ENCODE measurements at regions of chr12 and their contacts with region 1.

Region 1: GRCh38 chr12:101670007-101670687 is 27.3 kb upstream of the CHPT1 start:
- DNase-seq: peak; percentile 39 to 72 (median 50)
- ATAC-seq: peak; percentile 81
- H3K4me3 ChIP-seq: no peak overlapping the region
- H3K27ac ChIP-seq: no peak overlapping the region
- H3K4me1 ChIP-seq: no peaks in the 10 kb centered on the region; a peak in 3 of 5 replicates
- H3K27me3 ChIP-seq: peaks cover 2 to 7% of the 10 kb centered on the region in 2 experiments; a peak in 2 of 5 replicates
- CTCF ChIP-seq: peak; percentile 70 to 88 (median 75)
- EP300 ChIP-seq: peak; percentile 50; the same call in 1 of the 2 replicates
- POLR2A ChIP-seq: no peak
- RAD21 ChIP-seq: peak; percentile 71 to 82

Region 2: GRCh38 chr12:101634724-101635123 is 35.4 kb before region 1 on chr12:
- CTCF ChIA-PET with region 1: no interaction called
- POLR2A ChIA-PET with region 1: no interaction called
- in situ Hi-C with region 1: no loop called
- intact Hi-C with region 1: no loop called
- DNase-seq: no peak
- ATAC-seq: no peak
- H3K4me3 ChIP-seq: no peak overlapping the region
- H3K27ac ChIP-seq: no peak overlapping the region
- H3K4me1 ChIP-seq: no peaks in the 10 kb centered on the region
- H3K27me3 ChIP-seq: peaks cover 10 to 15% of the 10 kb centered on the region in 2 experiments; a peak in 3 of 5 replicates
- CTCF ChIP-seq: no peak
- EP300 ChIP-seq: no peak
- POLR2A ChIP-seq: no peak
- RAD21 ChIP-seq: no peak

Region 3: GRCh38 chr12:101697197-101697929 is 27.2 kb after region 1 on chr12 and contains the start of gene CHPT1:
- CTCF ChIA-PET with region 1: no interaction called
- POLR2A ChIA-PET with region 1: no interaction called
- in situ Hi-C with region 1: no loop called
- intact Hi-C with region 1: loop called (anchors 2 kb)
- DNase-seq: peak; percentile 93 to 96 (median 95)
- ATAC-seq: peak; percentile 81
- H3K4me3 ChIP-seq: peak within 1 kb of the TSS; percentile 87
- H3K27ac ChIP-seq: peak within 1 kb of the TSS; percentile 96
- H3K4me1 ChIP-seq: peaks cover 11 to 29% of the 10 kb centered on the region in 2 experiments
- H3K27me3 ChIP-seq: no peaks in the 10 kb centered on the region
- CTCF ChIP-seq: no peak
- EP300 ChIP-seq: peak; percentile 51
- POLR2A ChIP-seq: peak; percentile 73
- RAD21 ChIP-seq: no peak
- polyA plus RNA-seq, gene CHPT1: 15.3 to 24.3 TPM

Region 4: DNA sequence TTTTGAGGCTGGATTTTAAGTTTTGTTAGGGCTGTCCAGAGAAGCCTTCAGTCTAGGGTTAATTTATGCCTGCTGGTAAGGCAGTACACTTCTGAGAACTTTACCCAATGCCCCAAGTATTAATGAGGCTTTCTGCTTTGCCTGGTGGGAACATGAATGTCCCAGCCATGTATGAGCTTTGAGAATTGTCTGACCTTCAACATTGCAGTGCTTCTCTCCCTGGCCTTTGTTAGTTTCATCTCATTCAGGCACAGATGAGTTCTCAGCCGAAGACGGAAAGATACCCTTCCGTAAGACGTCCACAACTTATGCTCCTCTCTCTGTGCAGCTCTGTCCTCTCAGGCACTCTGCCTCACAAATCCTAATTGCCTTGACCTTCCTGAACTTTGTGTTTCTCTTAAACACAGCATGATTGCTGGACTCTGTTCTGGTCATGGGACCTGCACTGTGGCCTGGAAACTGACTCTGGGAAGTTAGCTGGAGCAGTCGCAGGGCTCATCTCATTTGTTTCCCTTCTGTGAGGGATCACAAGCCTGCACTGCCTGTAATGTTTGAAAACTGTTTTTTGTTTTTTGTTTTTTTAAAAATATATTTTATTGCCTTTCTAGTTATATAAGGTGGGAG is 43.0 kb after region 1 on chr12:
- CTCF ChIA-PET with region 1: no interaction called
- POLR2A ChIA-PET with region 1: no interaction called
- in situ Hi-C with region 1: no loop called
- intact Hi-C with region 1: loop called (anchors 5 kb)
- DNase-seq: peak in 1 of 4 experiments; percentile 49
- ATAC-seq: peak; percentile 79
- H3K4me3 ChIP-seq: no peak overlapping the region
- H3K27ac ChIP-seq: peak overlapping the region; percentile 30; the same call in 1 of the 3 replicates
- H3K4me1 ChIP-seq: peaks cover 3 to 15% of the 10 kb centered on the region in 2 experiments; a peak in 4 of 5 replicates
- H3K27me3 ChIP-seq: no peaks in the 10 kb centered on the region
- CTCF ChIP-seq: no peak
- EP300 ChIP-seq: no peak
- POLR2A ChIP-seq: no peak
- RAD21 ChIP-seq: no peak